ENCODE measurements at regions of chr13 and their contacts with region 1.

Region 1: GRCh38 chr13:20969182-20969581 is 66.6 kb upstream of the XPO4 start:
- DNase-seq: no peak
- ATAC-seq: peak; percentile 92
- H3K4me3 Mint-ChIP-seq: no peak overlapping the region
- H3K27ac Mint-ChIP-seq: no peak overlapping the region
- H3K4me1 Mint-ChIP-seq: peaks cover 10% of the 10 kb centered on the region
- H3K27me3 Mint-ChIP-seq: peaks cover 4% of the 10 kb centered on the region

Region 2: DNA sequence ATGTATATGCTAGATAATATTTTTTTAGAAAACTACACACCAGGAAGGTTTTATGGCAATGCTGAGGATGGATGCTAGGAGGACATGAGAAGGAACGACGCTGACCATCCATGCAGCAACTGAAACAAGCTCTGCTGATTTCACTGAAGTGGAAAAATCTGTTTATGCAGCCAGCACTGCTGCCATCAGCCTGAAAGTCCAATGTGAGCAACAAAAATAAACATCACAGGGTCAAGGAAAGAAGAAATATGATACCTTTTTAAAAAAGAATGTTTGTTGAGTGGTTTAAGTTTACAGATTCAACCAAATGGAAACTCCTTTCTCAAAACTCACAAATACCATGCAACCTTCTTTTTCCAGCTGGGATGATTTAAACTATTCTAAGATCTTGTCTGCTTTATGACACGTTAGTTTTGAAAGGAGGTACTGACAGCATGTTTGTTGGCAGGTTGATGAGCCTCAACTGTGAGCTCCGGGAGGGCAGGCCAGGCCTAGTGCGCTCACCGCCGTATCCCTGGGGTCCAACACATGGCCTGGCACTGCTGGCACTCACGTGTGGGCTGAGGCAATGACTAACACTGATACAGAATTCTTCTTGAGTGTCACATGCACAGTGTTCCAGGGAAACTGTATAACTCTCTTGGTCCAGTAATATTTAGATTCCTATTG is 45.5 kb after region 1 on chr13:
- CTCF ChIA-PET with region 1: no interaction called
- POLR2A ChIA-PET with region 1: no interaction called
- intact Hi-C with region 1: loop called in 1 of 2 experiments (anchors 1 kb)
- DNase-seq: no peak
- ATAC-seq: no peak
- H3K4me3 Mint-ChIP-seq: no peak overlapping the region
- H3K27ac Mint-ChIP-seq: no peak overlapping the region
- H3K4me1 Mint-ChIP-seq: peaks cover 28% of the 10 kb centered on the region
- H3K27me3 Mint-ChIP-seq: no peaks in the 10 kb centered on the region

Measured in activated CD4-positive, alpha-beta T cell treated with anti-CD3 and anti-CD28 coated beads for 36 hours (primary cell).